ENCODE measurements at regions of chr5 and their contacts with region 1.

Region 1: DNA sequence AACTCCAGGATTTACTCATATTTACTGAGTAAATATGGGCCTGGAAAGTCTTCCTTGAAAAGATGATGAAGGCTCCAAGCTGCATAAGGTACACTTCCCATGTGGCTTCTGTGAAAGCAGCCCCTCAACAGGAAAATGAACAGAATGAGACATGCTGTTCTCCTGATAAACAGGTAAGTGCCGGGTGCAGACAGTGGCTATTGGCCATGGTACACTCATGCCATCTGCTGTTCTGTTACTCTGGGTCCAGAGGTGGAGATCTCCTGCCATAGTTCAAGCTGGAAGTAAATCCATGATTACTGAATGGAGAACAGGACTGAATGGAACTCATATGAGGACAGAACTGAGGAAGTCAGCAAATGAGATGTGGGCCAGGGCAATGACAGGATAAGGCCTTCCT is 103.6 kb downstream of the SLIT3 start:
- DNase-seq: no peak
- ATAC-seq: no peak
- H3K4me3 ChIP-seq: no peak overlapping the region
- H3K27ac ChIP-seq: peak overlapping the region; percentile 33 to 49
- H3K4me1 ChIP-seq: peaks cover 0 to 13% of the 10 kb centered on the region in 2 donors
- H3K27me3 ChIP-seq: no peaks in the 10 kb centered on the region

Region 2: GRCh38 chr5:168987543-168988300 is 209.6 kb before region 1 on chr5:
- intact Hi-C with region 1: loop called (anchors 5 kb)
- DNase-seq: peak; percentile 80 to 89
- ATAC-seq: peak; percentile 68
- H3K4me3 ChIP-seq: no peak overlapping the region
- H3K27ac ChIP-seq: no peak overlapping the region
- H3K4me1 ChIP-seq: no peaks in the 10 kb centered on the region
- H3K27me3 ChIP-seq: no peaks in the 10 kb centered on the region

Region 3: DNA sequence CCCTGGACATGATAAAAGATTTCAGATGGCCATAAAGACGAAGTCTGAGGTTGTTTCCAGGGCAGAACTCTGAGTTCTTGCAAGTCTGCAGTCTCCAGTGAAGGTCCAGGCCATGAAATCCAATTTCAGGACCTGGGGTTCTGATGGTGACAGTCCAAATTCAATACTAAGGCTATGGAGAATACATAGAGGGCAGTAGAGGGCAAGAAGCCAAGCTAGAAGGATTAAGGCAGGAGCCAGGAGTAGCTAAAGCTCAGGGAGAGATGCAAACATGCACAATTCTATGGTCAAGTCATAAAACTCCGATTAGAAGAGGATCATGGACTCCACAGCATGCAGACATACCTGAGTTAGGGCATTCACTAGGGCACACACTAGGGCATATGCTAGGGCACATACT is 92.2 kb after region 1 on chr5:
- intact Hi-C with region 1: loop called in 1 of 2 experiments (anchors 10 kb)
- DNase-seq: no peak
- ATAC-seq: no peak
- H3K4me3 ChIP-seq: no peak overlapping the region
- H3K27ac ChIP-seq: no peak overlapping the region
- H3K4me1 ChIP-seq: peaks cover 0 to under 1% of the 10 kb centered on the region in 2 donors
- H3K27me3 ChIP-seq: no peaks in the 10 kb centered on the region

Region 4: DNA sequence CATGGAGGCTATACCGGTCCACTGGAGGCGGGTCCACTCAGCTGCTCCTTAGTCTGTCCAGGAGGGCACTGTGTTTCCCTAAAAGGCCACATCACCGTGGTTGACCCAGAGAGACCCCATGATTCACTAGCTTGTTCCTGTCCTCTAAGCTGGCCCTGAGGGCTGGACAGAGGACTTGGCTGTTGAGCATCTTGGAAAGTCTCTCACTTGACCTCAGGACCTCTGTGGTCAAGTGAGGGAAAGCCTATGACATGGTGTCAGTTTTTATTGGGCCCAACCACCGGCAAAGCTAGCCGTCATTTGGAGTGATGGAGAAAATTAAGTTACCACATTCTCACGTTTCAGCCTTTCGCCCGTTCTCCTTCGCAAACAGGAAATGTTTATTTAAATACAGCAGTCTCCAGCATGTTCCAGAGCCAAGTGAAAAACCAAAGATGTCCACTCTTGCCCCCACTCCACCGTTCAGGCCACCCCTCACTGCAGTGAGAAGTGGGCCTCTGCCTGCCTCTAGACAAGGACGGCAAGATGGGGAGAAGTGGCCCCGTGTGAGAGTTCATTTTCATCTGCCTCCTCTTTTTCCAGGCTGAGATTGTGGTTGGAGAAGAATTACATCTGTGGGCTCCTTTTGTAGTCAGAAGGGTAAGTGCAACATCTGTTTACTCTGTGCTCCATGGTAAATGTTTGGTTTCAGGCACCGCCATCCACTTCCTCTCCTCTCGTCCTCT is 99.2 kb after region 1 on chr5:
- intact Hi-C with region 1: loop called in 1 of 2 experiments (anchors 5 kb)
- DNase-seq: peak in 1 of 2 donors; percentile 54
- ATAC-seq: peak; percentile 58
- H3K4me3 ChIP-seq: no peak overlapping the region
- H3K27ac ChIP-seq: peak overlapping the region; percentile 18 to 47
- H3K4me1 ChIP-seq: peaks cover 0 to 6% of the 10 kb centered on the region in 2 donors
- H3K27me3 ChIP-seq: no peaks in the 10 kb centered on the region